CD4-positive, alpha-beta T cell (primary cell): ENCODE measurements at regions of chr12 and their contacts with region 1.

Region 1: GRCh38 chr12:108856428-108857157 is 790 bp downstream of the SSH1 start:
- DNase-seq: peak in 13 of 14 experiments; percentile 35 to 92 (median 58)
- ATAC-seq: peak; percentile 75
- H3K4me3 ChIP-seq: peak overlapping the region; percentile 72
- H3K4me3 Mint-ChIP-seq: peak overlapping the region; percentile 95
- H3K27ac ChIP-seq: peak overlapping the region in 1 of 2 donors; percentile 22
- H3K27ac Mint-ChIP-seq: peak overlapping the region; percentile 90
- H3K4me1 ChIP-seq: peaks cover 36% of the 10 kb centered on the region
- H3K4me1 Mint-ChIP-seq: peaks cover 42% of the 10 kb centered on the region
- H3K27me3 ChIP-seq: no peaks in the 10 kb centered on the region
- H3K27me3 Mint-ChIP-seq: no peaks in the 10 kb centered on the region
- CTCF ChIP-seq: no peak

Region 2: DNA sequence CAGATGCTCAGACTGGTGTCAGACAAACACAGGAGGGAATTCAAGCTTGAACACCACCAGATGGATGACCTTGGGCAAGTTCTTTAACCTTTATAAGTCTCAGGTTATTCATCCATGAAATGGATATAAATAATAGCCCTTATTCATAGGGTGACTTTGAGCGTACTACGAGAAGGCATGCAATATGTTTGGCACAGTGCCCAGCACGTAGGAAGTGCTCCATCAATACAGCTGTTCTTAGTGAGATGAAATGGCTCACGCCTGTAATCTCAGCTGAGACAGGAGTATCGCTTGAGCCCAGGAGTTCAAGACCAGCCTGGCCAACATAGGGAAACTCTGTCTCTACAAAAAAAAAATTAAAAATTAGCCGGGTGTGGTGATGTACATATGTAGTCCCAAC is 426.3 kb before region 1 on chr12:
- CTCF ChIA-PET with region 1: no interaction called
- POLR2A ChIA-PET with region 1: no interaction called
- intact Hi-C with region 1: no loop called
- DNase-seq: no peak
- ATAC-seq: no peak
- H3K4me3 ChIP-seq: no peak overlapping the region
- H3K4me3 Mint-ChIP-seq: no peak overlapping the region
- H3K27ac ChIP-seq: no peak overlapping the region
- H3K27ac Mint-ChIP-seq: no peak overlapping the region
- H3K4me1 ChIP-seq: no peaks in the 10 kb centered on the region
- H3K4me1 Mint-ChIP-seq: no peaks in the 10 kb centered on the region
- H3K27me3 ChIP-seq: no peaks in the 10 kb centered on the region
- H3K27me3 Mint-ChIP-seq: peaks cover 30% of the 10 kb centered on the region
- CTCF ChIP-seq: no peak

Region 3: GRCh38 chr12:108731105-108731865 is 125.3 kb before region 1 on chr12 and contains the start of gene CORO1C:
- CTCF ChIA-PET with region 1: no interaction called
- POLR2A ChIA-PET with region 1: no interaction called
- intact Hi-C with region 1: loop called in 1 of 2 experiments (anchors 5 kb)
- DNase-seq: peak; percentile 88 to 99 (median 92)
- ATAC-seq: peak; percentile 73
- H3K4me3 ChIP-seq: peak within 1 kb of the TSS; percentile 93
- H3K4me3 Mint-ChIP-seq: peak within 1 kb of the TSS; percentile 97
- H3K27ac ChIP-seq: peak within 1 kb of the TSS; percentile 75 to 90
- H3K27ac Mint-ChIP-seq: peak within 1 kb of the TSS; percentile 88
- H3K4me1 ChIP-seq: peaks cover 26% of the 10 kb centered on the region
- H3K4me1 Mint-ChIP-seq: peaks cover 26% of the 10 kb centered on the region
- H3K27me3 ChIP-seq: no peaks in the 10 kb centered on the region
- H3K27me3 Mint-ChIP-seq: no peaks in the 10 kb centered on the region
- CTCF ChIP-seq: peak; percentile 75
- total RNA-seq, gene CORO1C: 6.7 to 7.4 TPM

Region 4: GRCh38 chr12:108838194-108839017 is 18.2 kb before region 1 on chr12:
- CTCF ChIA-PET with region 1: no interaction called
- POLR2A ChIA-PET with region 1: interaction called, 14 read pairs
- intact Hi-C with region 1: no loop called
- DNase-seq: peak; percentile 20 to 87 (median 54)
- ATAC-seq: peak; percentile 88
- H3K4me3 ChIP-seq: no peak overlapping the region
- H3K4me3 Mint-ChIP-seq: no peak overlapping the region
- H3K27ac ChIP-seq: peak overlapping the region in 1 of 2 donors; percentile 77
- H3K27ac Mint-ChIP-seq: peak overlapping the region; percentile 31
- H3K4me1 ChIP-seq: peaks cover 35% of the 10 kb centered on the region
- H3K4me1 Mint-ChIP-seq: peaks cover 35% of the 10 kb centered on the region
- H3K27me3 ChIP-seq: no peaks in the 10 kb centered on the region
- H3K27me3 Mint-ChIP-seq: no peaks in the 10 kb centered on the region
- CTCF ChIP-seq: no peak

Region 5: DNA sequence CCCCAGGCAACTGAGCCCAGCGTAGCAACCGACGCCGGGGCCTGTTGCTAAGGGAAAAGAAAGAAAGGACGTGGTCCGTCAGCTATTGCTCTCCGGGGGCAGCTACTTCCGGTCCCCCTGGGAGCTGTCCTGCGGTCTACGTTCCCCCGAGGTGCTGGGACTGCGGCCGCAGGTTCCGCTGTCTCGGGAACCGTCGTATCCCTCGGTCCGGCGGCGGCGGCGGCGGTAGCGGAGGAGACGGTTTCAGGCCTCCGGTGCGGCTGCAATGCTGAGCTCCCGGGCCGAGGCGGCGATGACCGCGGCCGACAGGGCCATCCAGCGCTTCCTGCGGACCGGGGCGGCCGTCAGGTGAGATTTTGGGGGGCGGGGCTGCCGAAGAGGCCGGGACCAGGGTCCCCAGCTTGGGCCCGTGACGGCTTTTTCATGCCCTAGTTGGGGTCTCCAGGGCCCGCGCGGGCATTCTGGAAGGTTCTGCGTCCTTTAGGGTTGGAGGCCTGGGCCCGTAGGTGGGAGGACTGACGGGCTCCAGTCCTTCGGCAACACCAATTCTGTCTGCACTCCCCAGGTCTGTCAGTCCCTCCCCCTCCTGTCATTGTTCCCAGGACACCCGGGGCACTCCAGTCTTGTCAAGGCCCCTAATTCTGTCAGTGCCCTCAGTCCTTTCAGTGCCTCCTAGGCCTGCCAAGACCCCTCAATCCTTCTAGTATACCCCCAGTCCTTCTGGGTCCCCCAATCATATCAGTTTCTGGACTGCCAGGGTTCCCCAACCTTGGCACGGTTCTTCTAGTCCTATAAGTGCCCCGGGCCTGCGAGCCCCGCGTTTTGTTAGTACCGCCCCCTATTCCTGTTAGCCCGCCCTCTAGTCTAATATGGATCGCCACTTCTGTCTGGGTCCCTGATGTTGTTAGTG is 196.1 kb after region 1 on chr12 and contains the start of gene USP30:
- CTCF ChIA-PET with region 1: no interaction called
- POLR2A ChIA-PET with region 1: interaction called, 13 read pairs
- intact Hi-C with region 1: loop called in 1 of 2 experiments (anchors 5 kb)
- DNase-seq: peak; percentile 75 to 93 (median 81)
- ATAC-seq: peak; percentile 77
- H3K4me3 ChIP-seq: peak within 1 kb of the TSS; percentile 92
- H3K4me3 Mint-ChIP-seq: peak within 1 kb of the TSS; percentile 98
- H3K27ac ChIP-seq: peak within 1 kb of the TSS; percentile 87
- H3K27ac Mint-ChIP-seq: peak within 1 kb of the TSS; percentile 86
- H3K4me1 ChIP-seq: peaks cover 23% of the 10 kb centered on the region
- H3K4me1 Mint-ChIP-seq: peaks cover 13% of the 10 kb centered on the region
- H3K27me3 ChIP-seq: no peaks in the 10 kb centered on the region
- H3K27me3 Mint-ChIP-seq: no peaks in the 10 kb centered on the region
- CTCF ChIP-seq: no peak
- total RNA-seq, gene USP30: 21.8 to 23.0 TPM

Region 6: GRCh38 chr12:109154451-109155438 is 298.2 kb after region 1 on chr12:
- CTCF ChIA-PET with region 1: no interaction called
- POLR2A ChIA-PET with region 1: interaction called, 4 read pairs
- intact Hi-C with region 1: loop called in 1 of 2 experiments (anchors 2 kb)
- DNase-seq: peak; percentile 71 to 90 (median 78)
- ATAC-seq: peak; percentile 95
- H3K4me3 ChIP-seq: peak overlapping the region; percentile 75
- H3K4me3 Mint-ChIP-seq: peak overlapping the region; percentile 96
- H3K27ac ChIP-seq: peak overlapping the region in 1 of 2 donors; percentile 17
- H3K27ac Mint-ChIP-seq: peak overlapping the region; percentile 93
- H3K4me1 ChIP-seq: peaks cover 16% of the 10 kb centered on the region
- H3K4me1 Mint-ChIP-seq: peaks cover 21% of the 10 kb centered on the region
- H3K27me3 ChIP-seq: no peaks in the 10 kb centered on the region
- H3K27me3 Mint-ChIP-seq: no peaks in the 10 kb centered on the region
- CTCF ChIP-seq: no peak

Region 7: GRCh38 chr12:109573029-109573913 is 716.7 kb after region 1 on chr12 and contains the starts of genes MMAB and MVK:
- CTCF ChIA-PET with region 1: no interaction called
- POLR2A ChIA-PET with region 1: no interaction called
- intact Hi-C with region 1: loop called in 1 of 2 experiments (anchors 10 kb)
- DNase-seq: peak; percentile 95 to 100 (median 98)
- ATAC-seq: peak; percentile 91
- H3K4me3 ChIP-seq: peak within 1 kb of the TSS; percentile 78
- H3K4me3 Mint-ChIP-seq: peak within 1 kb of the TSS; percentile 99
- H3K27ac ChIP-seq: peak within 1 kb of the TSS; percentile 83 to 96
- H3K27ac Mint-ChIP-seq: peak within 1 kb of the TSS; percentile 95
- H3K4me1 ChIP-seq: peaks cover 19% of the 10 kb centered on the region
- H3K4me1 Mint-ChIP-seq: peaks cover 29% of the 10 kb centered on the region
- H3K27me3 ChIP-seq: no peaks in the 10 kb centered on the region
- H3K27me3 Mint-ChIP-seq: no peaks in the 10 kb centered on the region
- CTCF ChIP-seq: no peak
- total RNA-seq, gene MMAB: 8.6 to 9.2 TPM
- total RNA-seq, gene MVK: 8.2 to 8.4 TPM

Region 8: DNA sequence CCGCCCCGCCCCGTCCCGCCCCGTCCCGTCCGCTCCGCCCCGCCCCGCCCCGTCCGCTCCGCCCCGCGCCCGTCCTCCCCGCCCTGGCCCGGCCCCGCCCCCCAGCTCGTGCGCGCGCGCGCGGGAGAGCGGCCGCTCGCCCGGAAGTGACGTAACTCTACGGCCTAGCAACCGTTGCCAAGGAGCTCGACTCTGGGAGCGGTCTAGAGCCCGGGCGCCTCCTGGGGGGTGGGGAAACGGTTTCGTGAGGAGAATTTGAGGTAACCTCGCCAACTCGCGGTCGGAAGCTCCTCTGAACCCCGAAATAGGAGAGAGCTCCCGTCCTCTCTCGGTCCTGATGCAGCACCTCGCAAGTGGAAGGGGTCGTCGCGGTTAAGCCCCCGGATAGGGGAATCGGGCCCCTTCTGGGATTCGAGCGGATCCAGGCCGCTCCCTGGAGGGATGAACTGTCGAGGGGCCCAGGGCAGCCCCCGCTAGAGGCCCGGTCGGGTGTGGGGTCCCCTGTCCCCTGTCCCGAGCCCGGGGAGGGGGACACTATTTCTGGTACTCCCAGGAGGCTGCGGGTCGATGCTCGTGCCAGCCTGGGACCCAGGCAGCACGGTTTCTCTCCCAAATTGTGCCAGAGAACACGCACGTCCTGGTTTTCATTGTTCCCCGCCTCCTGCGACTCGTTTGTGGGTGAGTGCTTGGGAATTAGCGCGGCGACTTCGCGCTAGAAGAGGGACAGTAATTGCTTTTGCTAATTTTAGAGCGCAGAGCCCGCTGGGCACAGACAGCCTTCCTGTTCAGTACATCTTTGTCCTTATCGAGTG is 1267.8 kb after region 1 on chr12 and contains the start of gene IFT81:
- CTCF ChIA-PET with region 1: no interaction called
- POLR2A ChIA-PET with region 1: no interaction called
- intact Hi-C with region 1: loop called in 1 of 2 experiments (anchors 10 kb)
- DNase-seq: peak; percentile 94 to 99 (median 96)
- ATAC-seq: peak; percentile 89
- H3K4me3 ChIP-seq: peak within 1 kb of the TSS; percentile 98
- H3K4me3 Mint-ChIP-seq: peak within 1 kb of the TSS; percentile 92
- H3K27ac ChIP-seq: peak within 1 kb of the TSS; percentile 13 to 78
- H3K27ac Mint-ChIP-seq: peak within 1 kb of the TSS; percentile 63
- H3K4me1 ChIP-seq: peaks cover 12% of the 10 kb centered on the region
- H3K4me1 Mint-ChIP-seq: peaks cover 14% of the 10 kb centered on the region
- H3K27me3 ChIP-seq: no peaks in the 10 kb centered on the region
- H3K27me3 Mint-ChIP-seq: peaks cover 5% of the 10 kb centered on the region
- CTCF ChIP-seq: no peak
- total RNA-seq, gene IFT81: 0.41 to 1.1 TPM